ENCODE measurements at regions of chr6 and their contacts with region 1.

Region 1: GRCh38 chr6:90080876-90081481 is 186.7 kb downstream of the GJA10 start:
- DNase-seq: peak; percentile 96
- ATAC-seq: peak; percentile 62
- H3K4me3 Mint-ChIP-seq: peak overlapping the region; percentile 96
- H3K27ac Mint-ChIP-seq: peak overlapping the region; percentile 99
- H3K4me1 Mint-ChIP-seq: peaks cover 72% of the 10 kb centered on the region
- H3K27me3 Mint-ChIP-seq: no peaks in the 10 kb centered on the region
- CTCF ChIP-seq: no peak

Region 2: DNA sequence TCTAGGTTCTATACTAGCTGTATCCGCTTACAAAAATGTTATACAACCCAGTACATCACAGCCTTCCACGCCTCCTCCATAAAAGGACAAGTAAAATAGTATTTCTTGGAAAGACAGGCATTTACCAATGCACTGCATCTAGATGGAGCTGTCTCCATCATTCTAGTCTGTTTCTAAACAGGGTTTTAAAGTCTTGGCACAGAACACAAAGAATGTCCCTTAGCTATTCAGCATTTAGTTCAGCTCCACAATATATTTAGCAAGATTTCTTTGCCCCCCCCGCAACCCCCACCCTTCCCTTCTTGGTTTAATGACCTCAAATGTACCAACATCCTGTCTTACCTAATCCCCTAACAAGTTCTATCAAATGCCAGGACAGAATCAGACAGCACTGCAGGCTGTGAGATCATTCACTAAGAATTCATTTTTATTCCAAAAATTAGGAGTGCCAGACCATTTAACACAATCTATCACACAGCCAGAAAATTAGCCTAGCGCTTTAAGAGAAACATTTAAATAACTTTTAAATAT is 17.1 kb after region 1 on chr6:
- CTCF ChIA-PET with region 1: interaction called, 10 read pairs
- POLR2A ChIA-PET with region 1: interaction called, 6 read pairs
- intact Hi-C with region 1: no loop called
- DNase-seq: peak; percentile 68
- ATAC-seq: peak; percentile 44
- H3K4me3 Mint-ChIP-seq: no peak overlapping the region
- H3K27ac Mint-ChIP-seq: peak overlapping the region; percentile 85
- H3K4me1 Mint-ChIP-seq: peaks cover 88% of the 10 kb centered on the region
- H3K27me3 Mint-ChIP-seq: no peaks in the 10 kb centered on the region
- CTCF ChIP-seq: no peak

Region 3: DNA sequence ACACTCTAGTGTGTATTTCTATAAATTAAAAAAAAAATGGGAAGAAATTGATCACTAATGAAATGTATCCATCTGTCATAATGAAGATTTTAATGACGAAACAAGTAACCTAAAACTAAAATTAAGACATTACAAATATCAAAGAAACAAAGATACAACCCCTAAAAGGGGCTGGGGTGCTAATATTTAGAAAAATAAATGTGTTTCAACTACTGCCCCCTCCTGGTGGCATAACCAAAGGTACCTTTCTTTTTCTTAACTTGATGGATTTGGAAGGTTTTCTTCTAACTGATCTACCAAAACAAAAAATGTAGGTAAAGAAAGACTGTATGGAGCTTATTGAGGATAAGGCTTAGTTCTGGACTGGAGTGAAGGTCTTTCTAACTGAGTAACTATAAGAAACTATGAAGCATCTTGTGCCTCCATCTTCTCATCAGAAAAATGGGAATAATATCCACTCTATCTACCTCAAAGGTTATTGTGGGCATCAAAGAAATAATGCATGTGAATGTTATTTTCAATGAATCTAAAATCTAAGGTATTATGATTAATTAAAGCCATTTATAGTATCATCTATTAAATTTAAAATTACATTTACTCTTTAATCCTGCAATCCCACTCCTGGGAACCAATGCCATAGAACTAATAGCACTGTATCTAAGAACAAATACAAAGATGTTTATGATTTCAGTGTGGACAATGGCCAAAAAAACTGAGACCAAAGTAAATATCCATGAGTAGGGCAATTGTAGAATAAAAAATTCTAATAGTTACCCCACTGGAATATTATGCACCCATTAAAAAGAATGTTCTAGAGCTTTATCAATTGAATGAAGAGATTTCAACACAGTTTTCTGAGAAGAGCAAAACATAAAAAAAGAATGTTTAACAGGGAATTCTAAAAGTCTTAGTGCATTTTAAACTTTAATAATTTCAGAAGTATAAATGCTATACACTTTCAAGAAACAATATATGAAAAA is 98.5 kb after region 1 on chr6:
- CTCF ChIA-PET with region 1: interaction called, 6 read pairs
- POLR2A ChIA-PET with region 1: interaction called, 4 read pairs
- intact Hi-C with region 1: loop called (anchors 5 kb)
- DNase-seq: peak; percentile 64
- ATAC-seq: no peak
- H3K4me3 Mint-ChIP-seq: no peak overlapping the region
- H3K27ac Mint-ChIP-seq: peak overlapping the region; percentile 87
- H3K4me1 Mint-ChIP-seq: peaks cover 81% of the 10 kb centered on the region
- H3K27me3 Mint-ChIP-seq: no peaks in the 10 kb centered on the region
- CTCF ChIP-seq: peak; percentile 75

Region 4: DNA sequence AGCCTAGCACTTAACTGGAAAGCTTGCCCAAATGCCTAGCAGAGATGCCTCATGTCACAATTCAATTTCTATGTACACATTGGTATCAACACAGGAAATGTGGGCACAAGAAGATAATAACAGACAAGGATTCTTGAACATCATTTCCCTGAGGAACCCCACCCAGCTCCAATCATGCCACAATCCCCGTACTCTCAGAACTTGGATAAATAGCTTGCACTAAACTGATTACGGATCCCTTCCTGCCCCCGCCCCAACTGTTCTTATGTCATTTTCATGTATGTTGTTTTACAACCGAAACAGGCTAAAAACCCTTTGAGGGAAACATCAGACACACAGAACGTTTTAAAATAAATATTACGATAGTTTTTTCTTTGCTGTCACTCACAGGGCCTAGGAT is 128.5 kb after region 1 on chr6:
- CTCF ChIA-PET with region 1: no interaction called
- POLR2A ChIA-PET with region 1: no interaction called
- intact Hi-C with region 1: no loop called
- DNase-seq: peak; percentile 40
- ATAC-seq: no peak
- H3K4me3 Mint-ChIP-seq: no peak overlapping the region
- H3K27ac Mint-ChIP-seq: peak overlapping the region; percentile 76
- H3K4me1 Mint-ChIP-seq: peaks cover 74% of the 10 kb centered on the region
- H3K27me3 Mint-ChIP-seq: no peaks in the 10 kb centered on the region
- CTCF ChIP-seq: no peak

Region 5: DNA sequence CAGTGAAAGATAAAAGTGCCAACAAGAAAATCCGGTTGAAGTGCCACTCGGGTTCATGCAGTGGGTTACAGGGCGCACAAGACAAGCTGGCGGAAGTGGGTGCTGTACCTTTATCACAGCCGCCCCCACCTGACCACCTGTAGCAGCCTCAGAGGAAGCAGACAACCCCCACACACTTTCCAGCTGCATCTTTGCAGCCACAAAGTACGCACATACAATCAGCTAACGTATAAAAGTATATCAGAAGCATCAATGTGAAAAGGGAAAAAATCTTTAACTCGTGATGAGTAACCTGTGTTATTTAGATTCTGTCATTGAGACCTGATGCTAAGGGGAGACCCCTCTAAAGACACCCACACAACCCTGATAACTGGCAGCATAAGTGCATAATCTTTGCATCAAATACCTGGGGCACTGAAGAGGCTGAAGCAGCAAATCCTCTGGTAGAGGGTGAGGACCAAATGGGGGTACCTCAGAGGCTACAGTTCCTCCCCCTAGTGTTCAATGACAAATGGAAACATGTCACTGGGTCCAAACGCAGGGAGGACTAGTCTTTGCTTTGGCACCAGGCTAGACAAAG is 193.6 kb after region 1 on chr6:
- CTCF ChIA-PET with region 1: interaction called, 5 read pairs
- POLR2A ChIA-PET with region 1: interaction called, 7 read pairs
- intact Hi-C with region 1: loop called (anchors 5 kb)
- DNase-seq: peak; percentile 99
- ATAC-seq: peak; percentile 84
- H3K4me3 Mint-ChIP-seq: peak overlapping the region; percentile 47
- H3K27ac Mint-ChIP-seq: peak overlapping the region; percentile 96
- H3K4me1 Mint-ChIP-seq: peaks cover 87% of the 10 kb centered on the region
- H3K27me3 Mint-ChIP-seq: no peaks in the 10 kb centered on the region
- CTCF ChIP-seq: no peak

Region 6: GRCh38 chr6:90472744-90473143 is 391.8 kb after region 1 on chr6:
- CTCF ChIA-PET with region 1: no interaction called
- POLR2A ChIA-PET with region 1: interaction called, 4 read pairs
- intact Hi-C with region 1: loop called (anchors 5 kb)
- DNase-seq: peak; percentile 64
- ATAC-seq: peak; percentile 18
- H3K4me3 Mint-ChIP-seq: peak overlapping the region; percentile 7
- H3K27ac Mint-ChIP-seq: peak overlapping the region; percentile 88
- H3K4me1 Mint-ChIP-seq: peaks cover 78% of the 10 kb centered on the region
- H3K27me3 Mint-ChIP-seq: no peaks in the 10 kb centered on the region
- CTCF ChIP-seq: no peak